AG04449 (cell line): ENCODE measurements at regions of chr13 and their contacts with region 1.

Region 1: GRCh38 chr13:98033277-98034247 is 80.1 kb downstream of the IPO5 start:
- DNase-seq: peak; percentile 19
- H3K4me3 ChIP-seq: no peak overlapping the region
- CTCF ChIP-seq: peak; percentile 35

Region 2: DNA sequence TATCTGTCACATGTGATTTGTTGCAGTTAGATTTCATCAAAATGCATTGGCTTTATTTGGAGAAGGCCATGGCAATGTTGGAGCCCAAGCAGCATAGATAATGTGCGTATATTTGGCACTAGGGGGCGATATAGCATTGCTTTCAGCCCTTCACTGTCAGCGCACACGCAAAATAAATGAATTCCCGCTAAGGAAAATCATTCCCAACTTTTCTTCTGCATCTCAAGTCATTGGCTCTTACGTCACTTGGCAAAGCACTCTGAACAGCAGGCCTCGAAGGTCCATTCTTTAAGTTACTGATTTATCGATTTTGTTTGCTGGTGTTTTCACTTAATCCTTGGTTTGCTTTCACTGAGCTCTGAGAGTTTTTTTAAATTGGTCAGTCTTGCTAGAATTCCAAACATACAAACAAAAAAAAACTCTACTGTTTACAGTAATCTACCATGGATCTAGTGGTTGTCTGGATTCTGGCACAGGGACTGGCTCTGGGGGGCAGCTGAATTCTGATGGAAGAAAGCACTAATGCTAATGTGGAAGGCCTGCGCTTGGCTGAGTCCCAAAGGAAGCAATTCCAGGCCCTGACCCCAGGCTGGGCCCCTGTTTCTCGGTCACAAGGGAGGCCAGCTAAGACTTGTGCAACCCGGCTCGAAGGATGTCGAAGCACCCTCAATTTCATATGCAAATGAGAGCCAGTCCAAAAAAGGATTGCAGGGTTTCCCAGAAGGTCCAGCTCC is 177.8 kb before region 1 on chr13:
- CTCF ChIA-PET with region 1: interaction called, 10 read pairs
- POLR2A ChIA-PET with region 1: no interaction called
- DNase-seq: peak; percentile 45
- H3K4me3 ChIP-seq: no peak overlapping the region
- CTCF ChIP-seq: peak; percentile 72

Region 3: GRCh38 chr13:98105929-98106336 is 72.4 kb after region 1 on chr13:
- CTCF ChIA-PET with region 1: interaction called, 18 read pairs
- POLR2A ChIA-PET with region 1: no interaction called
- DNase-seq: no peak
- H3K4me3 ChIP-seq: no peak overlapping the region
- CTCF ChIP-seq: no peak

Region 4: GRCh38 chr13:98429977-98430736 is 396.6 kb after region 1 on chr13:
- CTCF ChIA-PET with region 1: interaction called, 27 read pairs
- POLR2A ChIA-PET with region 1: no interaction called
- DNase-seq: no peak
- H3K4me3 ChIP-seq: no peak overlapping the region
- CTCF ChIP-seq: no peak

Region 5: DNA sequence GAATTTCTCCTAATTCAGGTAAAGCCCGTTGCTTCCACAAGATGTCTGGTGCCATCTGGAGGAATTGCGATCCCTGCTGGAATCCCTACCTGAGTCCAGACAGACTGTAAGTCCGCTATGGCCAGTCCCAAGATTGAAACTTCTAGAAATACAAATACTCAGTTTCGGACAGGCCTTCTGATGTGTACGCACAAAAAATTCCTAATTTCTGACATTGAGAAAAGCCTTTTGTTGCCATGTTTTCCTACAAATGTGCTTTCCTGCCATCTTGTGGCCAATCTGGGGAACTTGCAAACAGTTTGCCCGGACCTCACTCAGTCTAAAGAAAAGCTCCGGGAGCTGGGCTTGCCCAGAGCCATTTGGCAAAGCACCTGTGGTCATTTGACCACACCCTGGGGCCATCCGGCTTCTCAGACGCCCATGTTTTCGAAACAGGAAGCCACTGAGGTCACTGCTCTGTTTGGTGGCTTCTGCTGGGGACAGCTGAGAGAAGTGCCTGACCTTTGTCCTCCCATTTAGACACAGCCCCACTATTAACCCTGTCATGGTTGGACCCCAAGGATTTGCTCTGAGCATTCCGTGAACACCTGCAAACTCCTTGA is 639.5 kb after region 1 on chr13:
- CTCF ChIA-PET with region 1: interaction called, 10 read pairs
- POLR2A ChIA-PET with region 1: no interaction called
- DNase-seq: peak; percentile 19
- H3K4me3 ChIP-seq: no peak overlapping the region
- CTCF ChIP-seq: peak; percentile 63